Breast epithelium (tissue), 4 donors: ENCODE measurements at regions of chr10 and their contacts with region 1.

Region 1: GRCh38 chr10:103966671-103967447 is at the start of gene SLK:
- DNase-seq: peak; percentile 65 to 69
- H3K4me3 ChIP-seq: peak within 1 kb of the TSS; percentile 86 to 94 (median 94)
- H3K27ac ChIP-seq: peak within 1 kb of the TSS; percentile 96 to 100
- H3K4me1 ChIP-seq: peaks cover 0 to 8% of the 10 kb centered on the region in 2 donors
- H3K27me3 ChIP-seq: no peaks in the 10 kb centered on the region
- CTCF ChIP-seq: no peak
- POLR2A ChIP-seq: no peak
- total RNA-seq, gene SLK: 63.2 to 94.4 (median 76.4) TPM

Region 2: DNA sequence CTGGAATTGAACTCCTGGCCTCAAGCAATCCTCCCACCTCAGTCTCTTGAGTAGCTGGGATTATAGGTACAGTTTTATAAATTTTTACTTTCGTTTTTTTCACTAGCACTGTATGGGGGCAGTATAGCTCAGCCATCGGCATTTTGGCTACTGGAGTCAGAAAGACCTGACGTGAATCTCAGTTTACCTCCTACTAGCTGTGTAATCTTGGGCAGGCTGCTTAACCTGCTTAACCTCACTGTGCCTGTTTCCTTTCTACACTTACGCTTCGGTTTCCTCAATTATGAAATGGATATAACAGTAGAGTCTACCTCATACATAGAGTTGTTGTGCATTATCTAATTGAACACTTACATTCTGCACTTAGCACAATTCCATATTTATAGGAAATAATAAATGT is 65.6 kb before region 1 on chr10:
- intact Hi-C with region 1: loop called (anchors 5 kb)
- DNase-seq: no peak
- H3K4me3 ChIP-seq: no peak overlapping the region
- H3K27ac ChIP-seq: peak overlapping the region in 1 of 2 donors; percentile 58
- H3K4me1 ChIP-seq: peaks cover 0 to 3% of the 10 kb centered on the region in 2 donors
- H3K27me3 ChIP-seq: no peaks in the 10 kb centered on the region
- CTCF ChIP-seq: no peak
- POLR2A ChIP-seq: no peak